Panc1 (cell line): ENCODE measurements at regions of chr3 and their contacts with region 1.

Region 1: DNA sequence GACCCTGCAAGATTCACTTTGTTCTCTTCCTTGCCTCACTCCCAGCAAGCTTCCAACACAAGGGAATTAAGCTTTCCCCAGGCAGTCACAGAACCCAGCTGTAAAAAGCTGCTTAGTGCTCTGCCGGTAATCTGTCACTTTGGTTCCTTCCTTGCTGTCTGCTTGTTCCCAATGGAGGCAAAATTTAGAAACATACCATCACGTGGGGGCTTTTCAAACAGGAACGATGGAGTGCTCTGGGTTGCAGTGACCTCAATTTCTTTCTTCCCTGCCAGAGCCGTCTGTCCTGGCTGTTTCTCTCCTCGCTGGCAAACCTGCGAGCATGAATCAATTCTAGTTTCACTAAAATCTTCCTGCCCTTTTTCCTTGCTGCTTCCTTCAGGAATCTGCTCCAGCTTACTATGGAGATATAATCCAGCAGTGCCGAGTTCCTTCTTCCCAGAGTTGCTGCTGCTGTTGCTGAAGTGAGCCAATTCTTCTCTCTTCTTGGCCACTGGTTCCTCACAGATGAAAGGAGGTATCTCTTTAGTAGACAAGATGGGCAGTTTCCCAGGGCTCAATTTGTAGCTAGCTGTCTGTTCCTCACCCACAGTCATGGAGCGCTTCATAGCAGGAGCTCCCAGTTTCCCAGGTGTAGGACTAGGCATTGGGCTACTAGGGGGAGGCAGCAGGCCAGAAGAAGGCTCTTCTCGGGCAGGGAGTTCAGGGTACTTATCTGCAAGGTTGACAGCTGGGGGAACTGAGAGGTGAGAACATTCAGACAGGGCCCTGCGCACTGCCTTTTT is 88.1 kb downstream of the DHX30 start:
- DNase-seq: no peak
- ATAC-seq: no peak
- H3K4me3 ChIP-seq: no peak overlapping the region
- H3K27ac ChIP-seq: no peak overlapping the region
- H3K4me1 ChIP-seq: no peaks in the 10 kb centered on the region
- H3K27me3 ChIP-seq: no peaks in the 10 kb centered on the region
- CTCF ChIP-seq: no peak

Region 2: GRCh38 chr3:47542471-47543173 is 348.4 kb before region 1 on chr3:
- CTCF ChIA-PET with region 1: no interaction called
- POLR2A ChIA-PET with region 1: interaction called, 11 read pairs
- in situ Hi-C with region 1: no loop called
- intact Hi-C with region 1: no loop called
- DNase-seq: no peak
- ATAC-seq: peak; percentile 30; the same call in 1 of the 2 replicates
- H3K4me3 ChIP-seq: no peak overlapping the region
- H3K27ac ChIP-seq: no peak overlapping the region
- H3K4me1 ChIP-seq: no peaks in the 10 kb centered on the region
- H3K27me3 ChIP-seq: no peaks in the 10 kb centered on the region
- CTCF ChIP-seq: no peak

Region 3: GRCh38 chr3:47901280-47901833 is 10.3 kb after region 1 on chr3:
- CTCF ChIA-PET with region 1: no interaction called
- POLR2A ChIA-PET with region 1: interaction called, 12 read pairs
- in situ Hi-C with region 1: no loop called
- intact Hi-C with region 1: no loop called
- DNase-seq: no peak
- ATAC-seq: no peak
- H3K4me3 ChIP-seq: no peak overlapping the region
- H3K27ac ChIP-seq: no peak overlapping the region
- H3K4me1 ChIP-seq: no peaks in the 10 kb centered on the region
- H3K27me3 ChIP-seq: no peaks in the 10 kb centered on the region
- CTCF ChIP-seq: no peak